ENCODE measurements at regions of chr1 and their contacts with region 1.

Region 1: GRCh38 chr1:209692745-209693504 is 11.7 kb upstream of the HSD11B1 start:
- DNase-seq: peak; percentile 75 to 81 (median 79)
- H3K4me3 ChIP-seq: no peak overlapping the region
- H3K4me3 Mint-ChIP-seq: peak overlapping the region in 1 of 2 donors; percentile 56
- H3K27ac ChIP-seq: no peak overlapping the region
- H3K27ac Mint-ChIP-seq: peak overlapping the region in 2 of 7 donors; percentile 58 to 85
- H3K4me1 ChIP-seq: peaks cover 4 to 7% of the 10 kb centered on the region in 2 donors
- H3K4me1 Mint-ChIP-seq: peaks cover 8% of the 10 kb centered on the region
- H3K27me3 ChIP-seq: peaks cover 4 to 5% of the 10 kb centered on the region in 2 donors
- H3K27me3 Mint-ChIP-seq: peaks cover 9 to 26% (median 19%) of the 10 kb centered on the region in 3 donors
- CTCF ChIP-seq: peak; percentile 93

Region 2: DNA sequence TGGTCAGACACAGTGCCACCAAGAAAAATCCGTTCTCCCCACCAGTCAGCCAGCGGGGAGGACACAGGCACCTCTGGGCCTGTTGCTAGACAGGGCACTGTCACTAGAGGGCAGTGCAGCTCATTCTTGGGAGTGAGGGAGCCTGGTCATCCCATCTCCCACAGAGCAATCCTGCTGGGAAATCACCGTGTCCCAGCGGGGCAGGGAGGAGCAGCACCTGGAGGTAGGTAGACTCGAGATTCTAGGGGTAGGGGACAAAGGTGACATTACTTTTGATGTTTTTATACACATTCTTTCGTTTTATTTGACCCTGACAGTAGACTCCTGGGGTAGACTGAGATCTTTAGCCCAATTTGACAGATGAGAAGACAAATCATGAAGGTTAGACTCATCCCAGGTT is 116.1 kb before region 1 on chr1:
- intact Hi-C with region 1: loop called (anchors 5 kb)
- DNase-seq: peak; percentile 45 to 74 (median 71)
- H3K4me3 ChIP-seq: no peak overlapping the region
- H3K4me3 Mint-ChIP-seq: peak overlapping the region in 1 of 2 donors; percentile 46
- H3K27ac ChIP-seq: no peak overlapping the region
- H3K27ac Mint-ChIP-seq: peak overlapping the region in 2 of 7 donors; percentile 37 to 68
- H3K4me1 ChIP-seq: no peaks in the 10 kb centered on the region
- H3K4me1 Mint-ChIP-seq: no peaks in the 10 kb centered on the region
- H3K27me3 ChIP-seq: peaks cover 8 to 16% of the 10 kb centered on the region in 2 donors
- H3K27me3 Mint-ChIP-seq: peaks cover 4 to 26% (median 8%) of the 10 kb centered on the region in 3 donors
- CTCF ChIP-seq: peak; percentile 99

Region 3: DNA sequence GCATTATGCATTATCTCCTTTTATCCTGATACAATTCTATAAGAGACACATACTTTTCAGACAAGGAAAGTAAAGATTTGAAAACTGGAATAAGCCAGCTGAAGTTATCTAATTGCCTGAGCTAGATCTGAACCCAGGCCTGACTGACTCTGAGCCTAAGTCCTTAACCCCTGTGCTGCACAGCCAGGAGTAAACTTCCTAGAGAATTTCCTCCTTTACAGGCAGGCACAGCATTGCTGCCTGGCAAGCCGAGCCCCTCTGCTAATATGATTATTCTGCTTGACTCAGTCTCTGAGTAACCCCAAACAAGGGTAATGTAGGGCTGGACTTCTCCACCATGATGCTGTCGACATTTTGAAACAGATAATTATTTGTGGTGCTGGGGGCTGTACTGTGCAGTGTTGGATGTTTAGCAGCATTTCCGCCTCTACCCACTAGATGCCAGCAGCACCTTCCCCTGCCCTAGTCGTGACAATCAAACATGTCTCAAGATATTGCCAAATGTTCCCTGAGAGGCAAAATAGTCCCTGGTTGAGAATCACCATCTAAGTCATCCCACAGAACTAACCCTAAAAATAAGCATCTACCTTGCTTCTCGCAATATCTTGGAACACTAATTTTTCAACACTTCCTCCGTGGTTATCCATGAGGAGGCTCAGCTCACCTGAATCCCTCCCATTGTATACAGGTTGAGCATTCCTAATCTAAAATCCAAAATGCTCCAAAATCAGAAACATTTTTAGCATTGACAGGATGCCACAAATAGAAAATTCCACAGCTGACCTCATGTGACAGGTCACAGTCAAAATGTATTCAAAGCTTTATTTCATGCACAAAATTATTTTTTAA is 90.9 kb before region 1 on chr1:
- intact Hi-C with region 1: loop called (anchors 2 to 10 kb)
- DNase-seq: peak; percentile 40 to 75 (median 48)
- H3K4me3 ChIP-seq: no peak overlapping the region
- H3K4me3 Mint-ChIP-seq: no peak overlapping the region
- H3K27ac ChIP-seq: no peak overlapping the region
- H3K27ac Mint-ChIP-seq: no peak overlapping the region
- H3K4me1 ChIP-seq: no peaks in the 10 kb centered on the region
- H3K4me1 Mint-ChIP-seq: peaks cover 2% of the 10 kb centered on the region
- H3K27me3 ChIP-seq: peaks cover 13 to 17% of the 10 kb centered on the region in 2 donors
- H3K27me3 Mint-ChIP-seq: peaks cover 7 to 16% (median 9%) of the 10 kb centered on the region in 3 donors
- CTCF ChIP-seq: peak; percentile 66

Region 4: DNA sequence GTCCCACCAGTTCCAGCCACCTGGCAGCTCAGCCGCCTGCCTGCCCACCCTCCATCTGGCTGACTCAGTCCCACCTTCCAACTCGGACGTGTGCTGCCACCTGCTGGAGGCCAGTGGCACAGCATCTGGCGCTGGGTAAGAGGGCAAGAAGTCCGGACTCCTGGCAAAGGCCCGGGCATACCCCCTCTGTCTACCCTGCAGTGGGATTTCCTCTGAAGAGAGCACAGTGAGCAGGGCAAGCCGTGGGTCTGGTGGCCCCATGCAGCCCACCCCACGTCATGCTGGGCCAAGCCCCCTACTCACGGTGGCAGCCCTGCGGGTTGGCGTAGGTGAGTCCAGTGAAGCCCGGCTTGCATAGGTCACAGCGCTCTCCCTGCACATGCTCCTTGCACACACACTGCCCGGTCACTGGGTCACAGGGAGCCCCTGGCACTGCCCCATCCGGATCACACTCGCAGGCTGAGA is 65.2 kb before region 1 on chr1:
- intact Hi-C with region 1: loop called in 1 of 2 experiments (anchors 5 kb)
- DNase-seq: peak; percentile 58 to 80 (median 69)
- H3K4me3 ChIP-seq: no peak overlapping the region
- H3K4me3 Mint-ChIP-seq: peak overlapping the region in 1 of 2 donors; percentile 59
- H3K27ac ChIP-seq: no peak overlapping the region
- H3K27ac Mint-ChIP-seq: peak overlapping the region in 5 of 7 donors; percentile 72 to 86 (median 84)
- H3K4me1 ChIP-seq: peaks cover 20% of the 10 kb centered on the region in 2 donors
- H3K4me1 Mint-ChIP-seq: peaks cover 27% of the 10 kb centered on the region
- H3K27me3 ChIP-seq: peaks cover 0 to 15% of the 10 kb centered on the region in 2 donors
- H3K27me3 Mint-ChIP-seq: peaks cover 18 to 40% (median 33%) of the 10 kb centered on the region in 3 donors
- CTCF ChIP-seq: peak; percentile 99

Region 5: GRCh38 chr1:209648931-209649776 is 43.8 kb before region 1 on chr1:
- intact Hi-C with region 1: loop called (anchors 5 kb)
- DNase-seq: peak; percentile 94 to 99 (median 98)
- H3K4me3 ChIP-seq: peak overlapping the region in 2 of 3 experiments; percentile 11 to 38
- H3K4me3 Mint-ChIP-seq: peak overlapping the region; percentile 21 to 31
- H3K27ac ChIP-seq: peak overlapping the region; percentile 48 to 92
- H3K27ac Mint-ChIP-seq: peak overlapping the region; percentile 83 to 99 (median 97)
- H3K4me1 ChIP-seq: peaks cover 60 to 67% of the 10 kb centered on the region in 2 donors
- H3K4me1 Mint-ChIP-seq: peaks cover 67% of the 10 kb centered on the region
- H3K27me3 ChIP-seq: peaks cover 3 to 29% of the 10 kb centered on the region in 2 donors
- H3K27me3 Mint-ChIP-seq: peaks cover 35 to 42% (median 37%) of the 10 kb centered on the region in 3 donors
- CTCF ChIP-seq: no peak

Region 6: DNA sequence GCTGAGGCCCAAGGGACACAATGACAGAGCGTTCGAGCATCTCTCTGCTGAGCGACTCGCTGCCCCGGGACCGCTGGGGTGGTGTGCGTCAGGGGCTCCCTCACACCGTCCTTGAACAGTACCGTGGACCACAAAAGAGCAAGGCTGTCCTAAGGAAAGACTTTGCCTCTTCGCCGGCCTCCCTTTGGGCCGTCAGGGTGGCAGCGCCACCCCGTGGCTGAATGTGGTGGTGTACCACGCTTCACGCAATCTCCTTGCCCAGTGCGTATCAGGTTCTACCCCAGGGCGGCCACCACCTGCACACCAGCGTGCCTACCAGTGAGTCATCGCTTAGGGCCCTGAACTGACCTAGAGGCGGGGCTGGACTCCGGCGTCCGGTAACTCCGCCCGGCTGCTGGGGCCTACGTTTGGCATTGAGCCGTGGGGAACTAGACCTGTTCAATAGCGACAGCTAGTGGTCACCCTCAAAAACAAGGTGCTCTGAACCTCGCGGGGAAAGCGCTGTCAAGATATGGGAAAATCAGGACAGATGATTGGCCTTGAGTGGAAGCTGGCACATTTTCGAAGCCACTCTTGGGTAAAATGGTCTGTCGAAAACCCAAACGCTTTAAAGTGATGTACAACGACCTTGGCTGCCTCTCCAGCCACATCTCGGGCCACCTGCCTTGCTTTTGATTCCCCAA is 54.8 kb after region 1 on chr1:
- intact Hi-C with region 1: loop called in 1 of 2 experiments (anchors 10 kb)
- DNase-seq: peak; percentile 96 to 99 (median 97)
- H3K4me3 ChIP-seq: peak overlapping the region; percentile 9 to 65 (median 24)
- H3K4me3 Mint-ChIP-seq: peak overlapping the region; percentile 62 to 85
- H3K27ac ChIP-seq: peak overlapping the region; percentile 15 to 63
- H3K27ac Mint-ChIP-seq: peak overlapping the region; percentile 48 to 93 (median 89)
- H3K4me1 ChIP-seq: peaks cover 50 to 51% of the 10 kb centered on the region in 2 donors
- H3K4me1 Mint-ChIP-seq: peaks cover 45% of the 10 kb centered on the region
- H3K27me3 ChIP-seq: no peaks in the 10 kb centered on the region
- H3K27me3 Mint-ChIP-seq: peaks cover 0 to 6% (median 0%) of the 10 kb centered on the region in 3 donors
- CTCF ChIP-seq: peak; percentile 93

Measured in CD14-positive monocyte (primary cell).